ENCODE measurements at regions of chr7 and their contacts with region 1.

Region 1: GRCh38 chr7:150356265-150356897 is 12.2 kb upstream of the REPIN1 start:
- DNase-seq: no peak
- H3K4me3 Mint-ChIP-seq: no peak overlapping the region
- H3K27ac Mint-ChIP-seq: peak overlapping the region; percentile 33
- H3K4me1 Mint-ChIP-seq: peaks cover 36% of the 10 kb centered on the region
- H3K27me3 Mint-ChIP-seq: no peaks in the 10 kb centered on the region

Region 2: GRCh38 chr7:149714050-149714909 is 642.1 kb before region 1 on chr7:
- CTCF ChIA-PET with region 1: no interaction called
- POLR2A ChIA-PET with region 1: no interaction called
- intact Hi-C with region 1: no loop called
- DNase-seq: peak; percentile 94
- H3K4me3 Mint-ChIP-seq: peak overlapping the region; percentile 74
- H3K27ac Mint-ChIP-seq: peak overlapping the region; percentile 38
- H3K4me1 Mint-ChIP-seq: peaks cover 17% of the 10 kb centered on the region
- H3K27me3 Mint-ChIP-seq: no peaks in the 10 kb centered on the region

Region 3: GRCh38 chr7:150368096-150368883 is 11.9 kb after region 1 on chr7 and contains the start of gene REPIN1:
- CTCF ChIA-PET with region 1: interaction called, 11 read pairs
- POLR2A ChIA-PET with region 1: interaction called, 4 read pairs
- intact Hi-C with region 1: loop called (anchors 1 kb)
- DNase-seq: peak; percentile 88
- H3K4me3 Mint-ChIP-seq: peak within 1 kb of the TSS; percentile 95
- H3K27ac Mint-ChIP-seq: peak within 1 kb of the TSS; percentile 95
- H3K4me1 Mint-ChIP-seq: peaks cover 30% of the 10 kb centered on the region
- H3K27me3 Mint-ChIP-seq: no peaks in the 10 kb centered on the region
- total RNA-seq, gene REPIN1: 52.3 to 56.9 TPM

Region 4: DNA sequence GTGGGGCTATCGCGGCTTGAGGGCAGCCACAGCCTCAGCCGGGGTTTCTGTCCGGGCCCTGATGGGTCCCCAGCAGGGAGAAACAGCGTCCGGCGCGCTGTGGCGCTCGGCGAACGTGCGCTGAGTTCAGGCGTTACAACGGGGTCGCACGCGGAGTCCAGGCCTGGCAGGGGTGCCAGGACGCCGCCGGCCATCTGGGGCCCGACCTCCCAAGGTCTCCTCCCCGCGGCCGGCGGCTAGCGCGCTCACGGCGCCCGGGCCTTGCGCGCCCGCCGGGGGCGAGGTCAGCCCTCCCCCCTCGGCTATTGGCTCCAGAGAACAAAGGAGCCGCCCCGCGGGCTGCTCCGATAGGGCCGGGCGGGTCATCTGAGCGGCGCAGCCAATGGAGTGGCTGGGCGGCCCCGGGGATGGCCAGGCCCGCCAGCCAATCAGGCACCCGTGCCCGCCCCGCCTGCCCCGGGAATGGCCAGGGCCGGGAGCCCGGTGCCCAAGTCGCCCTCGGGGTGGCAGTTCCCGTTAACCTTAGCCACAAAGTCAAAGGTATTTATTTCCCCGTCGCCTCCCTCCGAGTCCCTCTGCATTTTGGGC is 22.6 kb after region 1 on chr7 and contains the start of gene ZNF775:
- CTCF ChIA-PET with region 1: interaction called, 3 read pairs
- POLR2A ChIA-PET with region 1: no interaction called
- intact Hi-C with region 1: loop called (anchors 2 kb)
- DNase-seq: peak; percentile 95
- H3K4me3 Mint-ChIP-seq: peak within 1 kb of the TSS; percentile 81
- H3K27ac Mint-ChIP-seq: peak within 1 kb of the TSS; percentile 72
- H3K4me1 Mint-ChIP-seq: peaks cover 42% of the 10 kb centered on the region
- H3K27me3 Mint-ChIP-seq: no peaks in the 10 kb centered on the region
- total RNA-seq, gene ZNF775: 6.0 to 6.8 TPM

Region 5: GRCh38 chr7:150398108-150398985 is 42.0 kb after region 1 on chr7:
- CTCF ChIA-PET with region 1: no interaction called
- POLR2A ChIA-PET with region 1: no interaction called
- intact Hi-C with region 1: no loop called
- DNase-seq: no peak
- H3K4me3 Mint-ChIP-seq: no peak overlapping the region
- H3K27ac Mint-ChIP-seq: no peak overlapping the region
- H3K4me1 Mint-ChIP-seq: peaks cover 19% of the 10 kb centered on the region
- H3K27me3 Mint-ChIP-seq: no peaks in the 10 kb centered on the region

Region 6: DNA sequence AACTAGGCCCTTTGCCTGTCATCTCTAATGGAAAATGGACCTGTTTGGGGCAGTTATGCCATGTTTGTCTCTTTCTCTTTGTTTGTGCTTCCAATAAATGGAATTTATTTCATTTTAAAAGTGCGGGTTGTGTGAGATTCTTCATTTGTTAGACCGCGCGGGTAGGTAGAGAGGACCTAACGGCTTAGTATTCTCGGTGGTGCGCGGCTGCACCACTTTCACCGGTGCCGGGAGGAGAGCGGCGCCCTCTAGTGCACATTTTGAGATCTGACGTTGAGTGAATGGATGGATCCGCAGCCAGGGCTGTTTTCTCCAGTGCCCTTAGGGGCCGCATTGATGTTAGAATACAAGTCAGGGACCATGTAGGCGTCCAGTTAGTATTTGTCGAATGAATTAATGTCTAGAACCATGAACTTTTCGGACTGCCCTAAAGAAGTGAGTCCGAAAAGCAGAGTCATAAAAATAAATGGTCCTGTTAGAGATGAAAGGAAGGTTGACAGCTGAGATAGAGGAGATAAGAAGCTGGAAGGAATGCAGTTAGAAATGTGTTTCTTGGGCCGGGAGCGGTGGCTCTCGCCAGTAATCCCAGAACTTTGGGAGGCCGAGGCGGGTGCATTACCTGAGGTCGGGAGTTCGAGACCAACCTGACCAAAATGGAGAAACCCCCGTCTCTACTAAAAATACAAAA is 64.8 kb after region 1 on chr7:
- CTCF ChIA-PET with region 1: interaction called, 19 read pairs
- POLR2A ChIA-PET with region 1: no interaction called
- intact Hi-C with region 1: loop called (anchors 1 kb)
- DNase-seq: peak; percentile 91
- H3K4me3 Mint-ChIP-seq: no peak overlapping the region
- H3K27ac Mint-ChIP-seq: no peak overlapping the region
- H3K4me1 Mint-ChIP-seq: peaks cover 5% of the 10 kb centered on the region
- H3K27me3 Mint-ChIP-seq: no peaks in the 10 kb centered on the region

Measured in activated CD4-positive, alpha-beta memory T cell treated with anti-CD3 and anti-CD28 coated beads for 36 hours (primary cell).